T-cell (primary cell): ENCODE measurements at regions of chr10 and their contacts with region 1.

Region 1: DNA sequence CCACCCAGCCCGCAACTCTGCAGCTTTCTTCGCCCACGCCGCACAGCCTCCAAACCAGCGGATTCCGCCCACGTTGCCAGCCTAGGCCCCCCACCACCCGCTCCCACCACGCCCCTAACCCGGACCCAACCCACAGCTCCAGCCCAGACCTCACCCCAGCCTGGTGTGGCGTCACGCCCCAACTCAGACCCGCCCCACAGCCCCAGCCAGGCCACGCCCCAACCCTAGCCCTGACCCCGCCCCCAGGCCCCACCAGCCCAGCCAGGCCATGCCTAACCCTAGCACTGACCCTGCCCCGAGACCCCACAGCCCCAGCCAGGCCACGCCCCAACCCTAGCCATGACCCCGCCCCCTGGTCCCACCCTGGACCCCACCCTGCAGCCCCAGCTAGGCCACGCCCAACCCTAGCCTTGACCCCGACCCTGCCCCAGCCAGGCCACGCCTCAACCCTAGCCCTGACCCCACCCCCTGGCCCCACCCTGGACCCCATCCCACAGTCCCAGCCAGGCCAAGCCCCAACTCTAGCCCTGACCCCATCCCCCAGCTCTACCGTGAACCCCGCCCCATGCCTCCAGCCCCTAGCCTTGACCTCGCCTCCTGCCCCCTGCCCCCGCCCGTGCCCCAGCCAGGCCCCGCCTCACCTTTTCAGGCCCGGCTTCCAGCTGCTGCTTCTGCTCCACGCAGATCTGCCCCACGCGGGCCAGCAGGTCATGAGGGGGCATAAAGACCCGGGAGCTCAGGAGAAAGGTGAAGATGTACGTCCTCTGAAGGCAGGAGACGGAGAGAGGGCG is 64.0 kb downstream of the RASGEF1A start:
- DNase-seq: peak in 21 of 35 experiments; percentile 10 to 48 (median 29)
- ATAC-seq: peak; percentile 20 to 61 (median 34)
- H3K4me3 ChIP-seq: peak overlapping the region in 1 of 2 donors; percentile 54
- H3K4me3 Mint-ChIP-seq: peak overlapping the region; percentile 73 to 81 (median 79)
- H3K27ac ChIP-seq: no peak overlapping the region
- H3K27ac Mint-ChIP-seq: no peak overlapping the region
- H3K4me1 ChIP-seq: peaks cover 0 to 35% of the 10 kb centered on the region in 2 experiments
- H3K4me1 Mint-ChIP-seq: peaks cover 7 to 9% (median 8%) of the 10 kb centered on the region in 3 donors
- H3K27me3 ChIP-seq: no peaks in the 10 kb centered on the region
- H3K27me3 Mint-ChIP-seq: no peaks in the 10 kb centered on the region

Region 2: GRCh38 chr10:42707234-42707633 is 495.6 kb before region 1 on chr10:
- CTCF ChIA-PET with region 1: no interaction called
- POLR2A ChIA-PET with region 1: no interaction called
- DNase-seq: no peak
- ATAC-seq: no peak
- H3K4me3 ChIP-seq: no peak overlapping the region
- H3K4me3 Mint-ChIP-seq: no peak overlapping the region
- H3K27ac ChIP-seq: no peak overlapping the region
- H3K27ac Mint-ChIP-seq: no peak overlapping the region
- H3K4me1 ChIP-seq: no peaks in the 10 kb centered on the region
- H3K4me1 Mint-ChIP-seq: no peaks in the 10 kb centered on the region
- H3K27me3 ChIP-seq: peaks cover 0 to 2% of the 10 kb centered on the region in 2 experiments
- H3K27me3 Mint-ChIP-seq: peaks cover 11 to 33% of the 10 kb centered on the region in 2 donors

Region 3: GRCh38 chr10:43156590-43157341 is 46.1 kb before region 1 on chr10:
- CTCF ChIA-PET with region 1: no interaction called
- POLR2A ChIA-PET with region 1: interaction called in 1 of 2 experiments, 10 read pairs
- DNase-seq: no peak
- ATAC-seq: no peak
- H3K4me3 ChIP-seq: no peak overlapping the region
- H3K4me3 Mint-ChIP-seq: no peak overlapping the region
- H3K27ac ChIP-seq: no peak overlapping the region
- H3K27ac Mint-ChIP-seq: no peak overlapping the region
- H3K4me1 ChIP-seq: peaks cover 2 to 14% of the 10 kb centered on the region in 2 experiments
- H3K4me1 Mint-ChIP-seq: peaks cover 62 to 72% (median 69%) of the 10 kb centered on the region in 3 donors
- H3K27me3 ChIP-seq: no peaks in the 10 kb centered on the region
- H3K27me3 Mint-ChIP-seq: no peaks in the 10 kb centered on the region

Region 4: GRCh38 chr10:43216931-43217562 is 14.2 kb after region 1 on chr10:
- CTCF ChIA-PET with region 1: interaction called in 1 of 2 experiments, 4 read pairs
- POLR2A ChIA-PET with region 1: interaction called, 3 to 10 read pairs
- DNase-seq: no peak
- ATAC-seq: no peak
- H3K4me3 ChIP-seq: no peak overlapping the region
- H3K4me3 Mint-ChIP-seq: no peak overlapping the region
- H3K27ac ChIP-seq: no peak overlapping the region
- H3K27ac Mint-ChIP-seq: no peak overlapping the region
- H3K4me1 ChIP-seq: peaks cover 0 to 13% of the 10 kb centered on the region in 2 experiments
- H3K4me1 Mint-ChIP-seq: peaks cover 0 to 5% (median 0%) of the 10 kb centered on the region in 3 donors
- H3K27me3 ChIP-seq: peaks cover 0 to 13% of the 10 kb centered on the region in 2 experiments
- H3K27me3 Mint-ChIP-seq: peaks cover 0 to 2% of the 10 kb centered on the region in 2 donors